ENCODE measurements at regions of chr4 and their contacts with region 1.

Region 1: DNA sequence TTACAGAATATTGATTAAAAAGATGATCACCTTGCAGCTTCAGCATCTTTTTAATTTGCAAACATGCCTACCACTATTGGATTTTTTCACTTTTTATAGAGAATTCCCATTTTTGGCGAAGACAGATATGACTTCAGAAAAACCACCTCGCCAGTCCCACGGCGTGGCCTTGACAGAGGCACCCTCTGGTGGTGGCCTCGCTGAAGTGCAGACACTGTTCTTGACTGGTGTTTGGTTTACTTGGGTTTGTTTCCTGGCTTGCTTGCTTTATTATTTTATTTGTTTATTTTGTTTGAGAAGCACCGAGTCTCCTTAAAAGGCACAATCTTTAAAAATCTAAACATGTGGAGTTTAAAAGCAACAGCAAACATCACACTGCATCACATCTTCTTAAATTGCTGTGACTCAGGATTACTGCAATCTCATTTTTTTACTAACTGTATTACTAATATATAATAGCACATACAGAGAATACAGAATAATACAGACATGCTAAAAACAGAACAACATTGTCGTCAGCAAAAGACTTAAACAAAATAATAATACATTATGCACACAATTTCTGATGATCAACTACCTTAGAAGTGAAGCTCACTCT is 13.1 kb upstream of the AMTN start:
- DNase-seq: no peak
- H3K4me3 ChIP-seq: no peak overlapping the region
- CTCF ChIP-seq: no peak
- POLR2A ChIP-seq: no peak

Region 2: DNA sequence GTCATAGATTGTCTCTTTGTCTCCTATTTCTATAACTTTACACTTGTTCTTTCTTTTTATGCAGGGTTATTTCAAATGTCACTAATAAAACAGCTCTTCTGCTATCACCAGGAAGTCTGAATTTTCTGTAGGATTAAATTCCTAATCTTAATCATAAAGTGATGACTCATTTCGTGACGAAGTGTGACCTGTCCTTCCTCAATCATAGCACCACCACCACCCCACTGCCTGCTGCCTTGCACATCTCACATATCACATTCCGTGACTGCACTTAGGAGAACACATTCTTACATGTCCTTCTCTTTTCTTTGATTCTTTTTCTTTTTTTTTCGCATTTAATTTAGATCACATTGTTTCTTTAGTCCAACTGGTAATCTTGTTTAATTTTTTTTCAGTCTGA is 1466.7 kb before region 1 on chr4:
- intact Hi-C with region 1: loop called (anchors 5 kb)
- DNase-seq: no peak
- H3K4me3 ChIP-seq: no peak overlapping the region
- CTCF ChIP-seq: no peak
- POLR2A ChIP-seq: no peak

Measured in lower leg skin (tissue), 4 donors.